B cell (primary cell): ENCODE measurements at regions of chr1 and their contacts with region 1.

Region 1: DNA sequence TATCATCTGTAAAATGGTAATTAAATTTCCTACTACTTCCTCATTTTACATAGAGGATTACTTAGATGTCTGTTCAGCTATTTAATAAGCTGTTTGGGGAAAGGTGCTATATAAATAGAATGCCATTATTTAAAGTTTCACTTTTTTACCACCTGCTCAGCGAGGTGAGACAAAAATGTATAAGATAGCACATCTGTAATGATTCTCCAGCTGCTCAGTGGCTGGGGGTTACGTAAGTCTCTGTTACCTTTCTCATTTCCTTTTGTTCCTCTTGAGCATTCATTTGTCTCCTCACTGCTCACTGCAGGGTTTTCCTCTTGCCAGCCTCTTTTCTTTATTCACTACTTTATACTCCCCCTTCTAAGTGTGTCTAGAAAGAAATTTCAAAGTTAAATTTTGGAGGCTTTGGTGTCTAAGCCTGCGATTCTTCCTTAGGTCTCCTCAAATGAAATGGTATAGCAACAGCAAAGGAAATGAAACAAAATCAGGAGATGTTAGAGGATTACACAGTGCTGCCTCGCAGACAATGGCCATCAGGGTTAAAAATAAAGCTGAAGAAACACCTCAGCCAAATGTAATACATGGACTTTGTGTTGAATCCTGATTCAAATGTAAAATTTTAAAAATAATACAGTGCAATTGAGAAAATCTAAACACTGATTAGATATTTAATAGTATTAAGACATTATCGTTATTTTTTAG is 6.8 kb downstream of the RGS8 start:
- DNase-seq: peak; percentile 57
- ATAC-seq: peak; percentile 75
- H3K4me3 ChIP-seq: peak overlapping the region in 1 of 5 experiments; percentile 16
- H3K4me3 Mint-ChIP-seq: peak overlapping the region; percentile 35
- H3K27ac ChIP-seq: no peak overlapping the region
- H3K27ac Mint-ChIP-seq: no peak overlapping the region
- H3K4me1 ChIP-seq: peaks cover 16 to 17% of the 10 kb centered on the region in 2 donors
- H3K4me1 Mint-ChIP-seq: peaks cover 20% of the 10 kb centered on the region
- H3K27me3 ChIP-seq: peaks cover 0 to 17% (median 7%) of the 10 kb centered on the region in 4 experiments
- H3K27me3 Mint-ChIP-seq: peaks cover 12% of the 10 kb centered on the region
- CTCF ChIP-seq: no peak

Region 2: DNA sequence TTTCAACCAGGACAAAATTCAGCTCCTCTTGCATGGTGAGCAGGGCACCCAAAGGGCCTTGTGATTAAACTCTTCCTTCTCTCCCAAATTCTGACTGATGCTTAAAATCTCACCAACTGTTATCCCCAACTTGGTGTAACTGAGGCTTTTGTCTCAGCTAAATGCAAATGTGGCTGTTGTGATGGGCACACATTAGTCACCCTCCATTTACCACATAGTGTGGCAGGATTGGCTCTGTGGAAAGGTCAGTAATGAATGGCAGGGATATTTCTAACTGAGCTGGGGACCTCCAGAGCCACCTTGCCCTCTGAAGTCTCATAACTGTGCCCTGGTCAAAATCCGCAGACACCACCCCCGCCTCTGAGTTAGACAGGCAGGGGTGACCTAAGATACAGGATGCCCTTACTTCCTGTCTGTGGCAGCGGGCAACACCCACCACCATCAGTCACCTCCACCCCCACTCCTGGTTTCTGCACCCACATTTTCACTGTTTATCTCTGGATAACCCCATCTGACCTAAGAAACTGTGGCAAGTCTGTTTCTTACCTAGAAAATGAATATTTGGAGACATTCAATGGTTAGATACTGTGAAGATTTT is 48.0 kb before region 1 on chr1:
- CTCF ChIA-PET with region 1: no interaction called
- POLR2A ChIA-PET with region 1: no interaction called
- intact Hi-C with region 1: loop called (anchors 5 kb)
- DNase-seq: peak; percentile 35
- ATAC-seq: peak; percentile 59
- H3K4me3 ChIP-seq: no peak overlapping the region
- H3K4me3 Mint-ChIP-seq: peak overlapping the region; percentile 52
- H3K27ac ChIP-seq: peak overlapping the region in 1 of 2 donors; percentile 52
- H3K27ac Mint-ChIP-seq: peak overlapping the region; percentile 83
- H3K4me1 ChIP-seq: peaks cover 42 to 47% of the 10 kb centered on the region in 2 donors
- H3K4me1 Mint-ChIP-seq: peaks cover 53% of the 10 kb centered on the region
- H3K27me3 ChIP-seq: no peaks in the 10 kb centered on the region
- H3K27me3 Mint-ChIP-seq: no peaks in the 10 kb centered on the region
- CTCF ChIP-seq: no peak

Region 3: DNA sequence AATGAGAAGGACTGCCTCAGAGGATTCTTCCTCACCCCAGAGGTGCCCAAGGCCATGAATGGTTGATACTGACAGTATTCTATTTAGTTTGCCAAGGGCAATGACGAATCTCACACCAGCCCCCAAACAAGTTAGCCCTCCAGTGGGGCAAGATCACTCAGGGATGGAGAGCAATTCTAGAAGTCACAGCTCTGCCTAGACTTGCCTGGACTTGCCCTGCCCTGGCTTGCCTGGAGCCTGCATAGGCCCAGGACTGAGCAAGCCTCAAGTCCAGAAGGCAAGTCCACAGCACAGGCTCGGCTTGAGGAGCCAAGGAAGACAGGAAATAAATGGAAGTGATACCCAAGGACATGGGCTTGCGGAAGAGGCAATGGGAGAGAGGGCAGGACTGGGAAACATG is 33.8 kb before region 1 on chr1:
- CTCF ChIA-PET with region 1: no interaction called
- POLR2A ChIA-PET with region 1: no interaction called
- intact Hi-C with region 1: no loop called
- DNase-seq: no peak
- ATAC-seq: no peak
- H3K4me3 ChIP-seq: no peak overlapping the region
- H3K4me3 Mint-ChIP-seq: no peak overlapping the region
- H3K27ac ChIP-seq: no peak overlapping the region
- H3K27ac Mint-ChIP-seq: no peak overlapping the region
- H3K4me1 ChIP-seq: peaks cover 8 to 10% of the 10 kb centered on the region in 2 donors
- H3K4me1 Mint-ChIP-seq: peaks cover 13% of the 10 kb centered on the region
- H3K27me3 ChIP-seq: no peaks in the 10 kb centered on the region
- H3K27me3 Mint-ChIP-seq: no peaks in the 10 kb centered on the region
- CTCF ChIP-seq: no peak

Region 4: GRCh38 chr1:182666706-182667105 is 10.8 kb before region 1 on chr1:
- CTCF ChIA-PET with region 1: no interaction called
- POLR2A ChIA-PET with region 1: no interaction called
- intact Hi-C with region 1: no loop called
- DNase-seq: no peak
- ATAC-seq: no peak
- H3K4me3 ChIP-seq: no peak overlapping the region
- H3K4me3 Mint-ChIP-seq: no peak overlapping the region
- H3K27ac ChIP-seq: no peak overlapping the region
- H3K27ac Mint-ChIP-seq: no peak overlapping the region
- H3K4me1 ChIP-seq: no peaks in the 10 kb centered on the region
- H3K4me1 Mint-ChIP-seq: no peaks in the 10 kb centered on the region
- H3K27me3 ChIP-seq: no peaks in the 10 kb centered on the region
- H3K27me3 Mint-ChIP-seq: peaks cover 8% of the 10 kb centered on the region
- CTCF ChIP-seq: no peak